Activated CD8-positive, alpha-beta T cell treated with anti-CD3 and anti-CD28 coated beads for 36 hours (primary cell): ENCODE measurements at regions of chr17 and their contacts with region 1.

Region 1: DNA sequence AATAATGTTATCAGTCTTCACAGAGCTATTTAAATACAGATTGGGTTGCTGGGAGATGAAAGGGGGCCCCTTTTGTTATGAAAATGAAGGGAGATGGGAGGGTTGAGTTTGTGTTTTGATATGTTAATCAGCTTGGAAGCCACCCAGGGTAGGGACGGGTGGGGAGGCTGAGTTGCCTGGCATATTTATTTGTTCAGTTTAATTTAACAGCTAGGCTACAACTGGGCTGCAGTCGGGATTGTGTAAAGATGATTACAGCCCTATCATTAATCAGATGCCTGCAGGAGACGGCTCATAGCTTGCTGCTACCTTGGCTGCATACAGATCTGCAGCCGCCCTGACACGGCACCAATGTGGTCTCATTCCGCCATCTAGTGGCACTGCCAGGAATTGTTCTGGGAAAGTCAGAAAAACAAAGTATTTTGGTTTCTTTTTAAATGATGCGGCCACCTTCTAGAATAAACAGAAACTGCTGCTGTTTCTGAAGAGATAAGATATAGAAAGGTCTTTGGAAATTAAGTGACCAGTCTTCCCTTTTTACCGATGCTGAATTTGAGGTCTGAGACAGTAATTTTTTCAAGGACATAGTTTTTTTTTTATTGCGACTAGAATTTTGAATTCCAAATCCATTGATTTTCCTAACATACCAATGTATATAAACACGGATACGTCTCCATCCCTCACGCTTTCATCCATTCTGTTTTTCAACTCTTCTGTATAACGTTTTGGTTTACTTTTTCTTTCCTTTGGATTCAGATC is 458.0 kb upstream of the ASIC2 start:
- DNase-seq: peak; percentile 80
- ATAC-seq: peak; percentile 70
- H3K4me3 Mint-ChIP-seq: no peak overlapping the region
- H3K27ac Mint-ChIP-seq: no peak overlapping the region
- H3K4me1 Mint-ChIP-seq: peaks cover 6% of the 10 kb centered on the region
- H3K27me3 Mint-ChIP-seq: peaks cover 37% of the 10 kb centered on the region
- CTCF ChIP-seq: peak; percentile 85

Region 2: DNA sequence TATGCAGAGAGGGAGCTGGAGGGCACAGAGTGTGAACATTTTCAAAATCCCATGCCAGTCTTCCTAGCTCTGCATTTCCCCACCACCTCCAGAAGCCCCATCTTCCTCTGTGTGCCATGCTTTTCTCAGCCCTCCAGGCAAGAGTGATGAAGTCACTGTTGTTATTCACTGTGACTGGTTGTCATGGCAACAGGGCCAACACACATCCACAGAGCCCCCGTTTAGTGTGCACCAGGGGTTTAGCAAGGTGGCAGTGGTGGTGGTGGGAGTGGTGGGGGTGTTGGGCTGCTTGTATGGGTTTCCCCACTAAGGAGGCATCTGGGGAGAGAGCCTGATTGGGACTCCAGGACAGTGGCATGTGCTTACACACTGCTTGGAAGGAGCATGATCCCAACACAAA is 148.1 kb before region 1 on chr17:
- CTCF ChIA-PET with region 1: no interaction called
- POLR2A ChIA-PET with region 1: no interaction called
- intact Hi-C with region 1: no loop called
- DNase-seq: peak; percentile 1
- ATAC-seq: no peak
- H3K4me3 Mint-ChIP-seq: no peak overlapping the region
- H3K27ac Mint-ChIP-seq: no peak overlapping the region
- H3K4me1 Mint-ChIP-seq: no peaks in the 10 kb centered on the region
- H3K27me3 Mint-ChIP-seq: peaks cover 1% of the 10 kb centered on the region
- CTCF ChIP-seq: no peak

Region 3: GRCh38 chr17:33682599-33682998 is 68.5 kb before region 1 on chr17:
- CTCF ChIA-PET with region 1: no interaction called
- POLR2A ChIA-PET with region 1: no interaction called
- intact Hi-C with region 1: no loop called
- DNase-seq: no peak
- ATAC-seq: no peak
- H3K4me3 Mint-ChIP-seq: no peak overlapping the region
- H3K27ac Mint-ChIP-seq: no peak overlapping the region
- H3K4me1 Mint-ChIP-seq: no peaks in the 10 kb centered on the region
- H3K27me3 Mint-ChIP-seq: no peaks in the 10 kb centered on the region
- CTCF ChIP-seq: no peak

Region 4: GRCh38 chr17:33725675-33726271 is 25.3 kb before region 1 on chr17:
- CTCF ChIA-PET with region 1: interaction called, 21 read pairs
- POLR2A ChIA-PET with region 1: no interaction called
- intact Hi-C with region 1: no loop called
- DNase-seq: peak; percentile 28
- ATAC-seq: no peak
- H3K4me3 Mint-ChIP-seq: no peak overlapping the region
- H3K27ac Mint-ChIP-seq: no peak overlapping the region
- H3K4me1 Mint-ChIP-seq: no peaks in the 10 kb centered on the region
- H3K27me3 Mint-ChIP-seq: peaks cover 14% of the 10 kb centered on the region
- CTCF ChIP-seq: peak; percentile 49